ENCODE measurements at regions of chr7 and their contacts with region 1.

Region 1: DNA sequence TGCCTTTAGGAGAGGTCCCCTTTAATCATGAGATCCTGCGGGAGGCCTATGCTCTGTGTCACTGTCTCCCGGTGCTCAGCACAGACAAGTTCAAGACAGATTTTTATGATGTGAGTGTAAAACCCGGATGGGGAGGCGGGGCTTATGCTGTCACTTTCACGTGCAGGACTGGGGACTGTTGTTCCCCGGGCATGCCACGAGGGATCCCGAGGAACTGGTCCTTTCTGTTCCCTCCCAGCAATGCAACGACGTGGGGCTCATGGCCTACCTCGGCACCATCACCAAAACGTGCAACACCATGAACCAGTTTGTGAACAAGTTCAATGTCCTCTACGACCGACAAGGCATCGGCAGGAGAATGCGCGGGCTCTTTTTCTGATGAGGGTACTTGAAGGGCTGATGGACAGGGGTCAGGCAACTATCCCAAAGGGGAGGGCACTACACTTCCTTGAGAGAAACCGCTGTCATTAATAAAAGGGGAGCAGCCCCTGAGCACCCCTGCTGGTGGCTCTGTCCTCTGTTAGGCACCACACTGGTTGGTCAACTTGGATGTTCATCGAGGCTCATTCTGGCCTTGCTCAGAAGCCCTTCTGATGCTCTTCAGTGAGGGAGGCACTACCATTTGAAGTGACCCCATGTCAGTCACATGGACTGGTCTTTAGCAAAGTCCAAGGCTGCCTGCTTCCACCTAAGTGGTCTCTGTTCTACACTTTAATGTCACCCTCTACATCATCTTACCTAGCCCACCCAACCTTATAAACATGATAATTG is 2.8 kb downstream of the COPS6 start:
- DNase-seq: no peak
- H3K4me3 ChIP-seq: no peak overlapping the region
- H3K27ac ChIP-seq: no peak overlapping the region
- H3K4me1 ChIP-seq: peaks cover 0 to 17% of the 10 kb centered on the region in 2 donors
- H3K27me3 ChIP-seq: no peaks in the 10 kb centered on the region
- CTCF ChIP-seq: no peak
- POLR2A ChIP-seq: no peak

Region 2: DNA sequence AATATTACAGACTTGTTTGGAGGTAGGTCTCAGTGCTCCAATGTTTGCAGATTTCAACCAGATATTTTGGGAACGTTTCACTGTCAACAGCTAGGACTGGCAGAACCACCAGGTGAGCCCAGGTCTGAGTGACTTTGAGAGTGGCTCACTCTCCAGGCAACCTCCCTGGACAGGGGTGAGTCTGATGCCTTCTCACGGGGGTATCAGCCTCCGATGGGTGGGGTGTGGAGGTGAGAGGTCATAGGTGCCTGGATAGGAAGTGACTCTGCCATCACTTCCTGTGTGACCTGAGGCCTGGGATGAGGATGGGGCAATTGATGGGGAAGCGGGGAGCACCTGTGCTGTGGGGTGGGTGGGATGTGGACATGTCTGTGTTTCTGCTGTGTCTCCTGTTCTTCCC is 120.4 kb before region 1 on chr7:
- intact Hi-C with region 1: no loop called
- DNase-seq: no peak
- H3K4me3 ChIP-seq: no peak overlapping the region
- H3K27ac ChIP-seq: no peak overlapping the region
- H3K4me1 ChIP-seq: no peaks in the 10 kb centered on the region
- H3K27me3 ChIP-seq: no peaks in the 10 kb centered on the region
- CTCF ChIP-seq: no peak
- POLR2A ChIP-seq: no peak

Region 3: DNA sequence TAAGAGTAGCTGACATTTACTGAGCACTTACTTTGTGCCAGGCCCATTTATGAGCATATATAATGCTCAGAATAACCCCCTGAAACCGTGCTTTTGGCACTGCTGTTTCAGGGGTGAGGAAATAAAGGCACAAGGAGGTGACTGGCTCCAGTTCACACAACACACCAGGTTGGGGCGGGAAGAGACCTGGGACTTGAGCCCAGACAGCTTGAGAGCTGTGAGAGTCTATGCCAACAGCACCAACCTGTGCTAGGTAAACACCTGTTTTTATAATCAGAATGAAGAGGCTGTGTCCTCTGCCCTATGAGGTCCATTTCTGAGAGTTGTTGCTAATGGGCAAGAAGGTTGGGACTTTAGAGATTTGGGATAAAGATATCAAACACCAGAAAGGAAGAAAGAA is 107.0 kb before region 1 on chr7:
- intact Hi-C with region 1: no loop called
- DNase-seq: peak; percentile 22 to 40
- H3K4me3 ChIP-seq: no peak overlapping the region
- H3K27ac ChIP-seq: no peak overlapping the region
- H3K4me1 ChIP-seq: no peaks in the 10 kb centered on the region
- H3K27me3 ChIP-seq: no peaks in the 10 kb centered on the region
- CTCF ChIP-seq: no peak
- POLR2A ChIP-seq: no peak

Region 4: GRCh38 chr7:99997545-99998137 is 94.0 kb before region 1 on chr7:
- intact Hi-C with region 1: no loop called
- DNase-seq: peak; percentile 32 to 40
- H3K4me3 ChIP-seq: peak overlapping the region in 1 of 3 donors; percentile 38
- H3K27ac ChIP-seq: peak overlapping the region; percentile 7 to 74 (median 48)
- H3K4me1 ChIP-seq: peaks cover 12 to 15% of the 10 kb centered on the region in 2 donors
- H3K27me3 ChIP-seq: no peaks in the 10 kb centered on the region
- CTCF ChIP-seq: peak in 3 of 6 experiments; percentile 11 to 46 (median 26)
- POLR2A ChIP-seq: peak; percentile 1 to 26

Region 5: GRCh38 chr7:100126931-100127865 is 35.6 kb after region 1 on chr7 and contains the start of gene MBLAC1:
- intact Hi-C with region 1: loop called (anchors 5 kb)
- DNase-seq: peak; percentile 88 to 89
- H3K4me3 ChIP-seq: peak within 1 kb of the TSS; percentile 86 to 99 (median 93)
- H3K27ac ChIP-seq: peak within 1 kb of the TSS; percentile 93 to 100 (median 97)
- H3K4me1 ChIP-seq: peaks cover 6 to 22% of the 10 kb centered on the region in 2 donors
- H3K27me3 ChIP-seq: no peaks in the 10 kb centered on the region
- CTCF ChIP-seq: no peak
- POLR2A ChIP-seq: peak in 1 of 2 donors; percentile 54
- total RNA-seq, gene MBLAC1: 3.0 to 12.5 (median 6.1) TPM